ENCODE measurements at regions of chr1 and their contacts with region 1.

Region 1: DNA sequence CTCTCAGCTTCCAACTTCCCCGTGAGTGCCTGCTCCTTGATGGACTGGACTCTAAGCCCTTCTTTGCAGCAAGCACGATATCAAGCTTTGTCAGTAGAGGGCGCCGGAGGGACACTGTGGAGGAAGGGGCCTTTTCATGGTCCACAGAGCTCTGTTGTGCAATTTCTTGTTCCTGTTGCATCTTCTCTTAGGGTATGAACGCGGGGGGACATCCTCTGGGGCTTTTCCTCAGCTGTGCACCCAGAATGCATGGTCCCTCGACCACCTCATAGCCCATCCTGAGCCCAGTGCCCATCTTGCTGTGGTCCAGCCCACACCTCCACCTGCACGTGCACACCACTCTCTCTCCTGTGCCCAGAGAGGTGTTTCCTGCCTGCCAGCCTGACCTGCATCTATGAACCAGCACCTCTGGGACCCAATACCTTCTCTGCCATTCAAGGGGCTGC is 556.8 kb downstream of the PTPRU start:
- DNase-seq: peak; percentile 35 to 67
- ATAC-seq: peak; percentile 56 to 86; a peak in 4 of 6 replicates
- H3K4me3 ChIP-seq: no peak overlapping the region
- H3K27ac ChIP-seq: peak overlapping the region; percentile 53 to 71; a peak in 3 of 6 replicates
- H3K4me1 ChIP-seq: no peaks in the 10 kb centered on the region
- CTCF ChIP-seq: peak; percentile 62
- EP300 ChIP-seq: no peak
- POLR2A ChIP-seq: no peak
- RAD21 ChIP-seq: peak; percentile 67 to 76

Region 2: GRCh38 chr1:30083800-30084464 is 290.8 kb after region 1 on chr1:
- CTCF ChIA-PET with region 1: interaction called, 11 read pairs
- POLR2A ChIA-PET with region 1: no interaction called
- DNase-seq: peak; percentile 38 to 56
- ATAC-seq: peak; percentile 44 to 81; a peak in 3 of 6 replicates
- H3K4me3 ChIP-seq: no peak overlapping the region
- H3K27ac ChIP-seq: peak overlapping the region; percentile 76 to 87
- H3K4me1 ChIP-seq: peaks cover 28% of the 10 kb centered on the region
- CTCF ChIP-seq: no peak
- EP300 ChIP-seq: no peak
- POLR2A ChIP-seq: no peak
- RAD21 ChIP-seq: no peak

Region 3: GRCh38 chr1:30106125-30106524 is 313.0 kb after region 1 on chr1:
- CTCF ChIA-PET with region 1: interaction called, 11 read pairs
- POLR2A ChIA-PET with region 1: no interaction called
- DNase-seq: peak; percentile 21 to 38
- ATAC-seq: peak; percentile 83 to 93; a peak in 5 of 6 replicates
- H3K4me3 ChIP-seq: no peak overlapping the region
- H3K27ac ChIP-seq: no peak overlapping the region
- H3K4me1 ChIP-seq: no peaks in the 10 kb centered on the region; the same call in 2 of the 3 replicates
- CTCF ChIP-seq: peak; percentile 34
- EP300 ChIP-seq: no peak
- POLR2A ChIP-seq: no peak
- RAD21 ChIP-seq: peak; percentile 29 to 41; a peak in 3 of 5 replicates

Measured in A549 (cell line).